Right ventricle myocardium inferior (tissue), 1 donor: ENCODE measurements at regions of chr5 and their contacts with region 1.

Region 1: DNA sequence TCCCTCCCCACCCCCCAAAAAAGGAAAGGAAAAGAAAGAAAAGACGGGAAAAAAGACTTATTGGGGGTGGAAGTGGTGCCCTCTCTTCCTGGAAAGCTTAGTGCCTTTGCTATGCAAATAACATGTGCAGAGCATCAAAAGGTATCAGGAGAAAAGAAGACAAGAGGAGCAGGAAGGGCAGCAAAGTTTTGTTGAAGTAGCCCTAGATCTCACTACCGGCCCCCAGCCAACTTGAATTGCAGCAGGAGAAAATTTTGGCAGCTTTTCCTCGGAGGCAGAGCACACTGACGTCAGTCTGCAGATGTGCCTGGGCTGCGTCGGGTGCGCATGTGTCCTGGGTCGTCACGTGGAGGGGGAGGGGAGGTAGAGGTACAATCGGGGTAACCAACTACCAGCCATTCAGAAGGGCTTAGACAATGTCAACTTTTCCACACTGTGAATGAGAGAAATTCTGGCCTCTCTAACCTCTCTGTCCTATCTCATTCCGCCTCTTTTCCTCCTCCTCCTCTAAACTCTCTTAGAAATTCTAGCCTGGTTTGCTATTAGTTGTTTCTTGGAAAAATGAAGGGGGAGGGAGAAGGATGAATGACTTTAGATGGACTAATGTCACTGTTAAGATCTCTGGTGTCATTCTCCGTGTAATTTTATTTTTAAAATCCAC is at the start of gene ADAMTS6:
- DNase-seq: peak; percentile 93
- ATAC-seq: peak; percentile 96
- total RNA-seq, gene ADAMTS6: 0.73 TPM

Region 2: GRCh38 chr5:64811050-64811640 is 670.6 kb before region 1 on chr5:
- intact Hi-C with region 1: loop called (anchors 1 kb)
- DNase-seq: no peak
- ATAC-seq: no peak

Region 3: GRCh38 chr5:64971513-64971912 is 510.3 kb before region 1 on chr5:
- intact Hi-C with region 1: loop called (anchors 5 kb)
- DNase-seq: no peak
- ATAC-seq: no peak

Region 4: GRCh38 chr5:65102828-65103711 is 378.7 kb before region 1 on chr5:
- intact Hi-C with region 1: loop called (anchors 1 kb)
- DNase-seq: peak; percentile 78
- ATAC-seq: peak; percentile 83